Heart left ventricle (tissue), 16 donors: ENCODE measurements at regions of chr6 and their contacts with region 1.

Region 1: GRCh38 chr6:48765352-48765961 is 654.5 kb upstream of the PTCHD4 start:
- DNase-seq: peak in 3 of 5 donors; percentile 6 to 35 (median 26)
- ATAC-seq: peak in 1 of 4 donors; percentile 59
- H3K4me3 ChIP-seq: no peak overlapping the region
- H3K27ac ChIP-seq: no peak overlapping the region
- H3K4me1 ChIP-seq: peaks cover 0 to 2% (median 0%) of the 10 kb centered on the region in 12 donors
- H3K27me3 ChIP-seq: peaks cover 0 to 6% (median 0%) of the 10 kb centered on the region in 9 donors
- CTCF ChIP-seq: peak in 10 of 12 donors; percentile 12 to 58 (median 50)
- POLR2A ChIP-seq: no peak

Region 2: DNA sequence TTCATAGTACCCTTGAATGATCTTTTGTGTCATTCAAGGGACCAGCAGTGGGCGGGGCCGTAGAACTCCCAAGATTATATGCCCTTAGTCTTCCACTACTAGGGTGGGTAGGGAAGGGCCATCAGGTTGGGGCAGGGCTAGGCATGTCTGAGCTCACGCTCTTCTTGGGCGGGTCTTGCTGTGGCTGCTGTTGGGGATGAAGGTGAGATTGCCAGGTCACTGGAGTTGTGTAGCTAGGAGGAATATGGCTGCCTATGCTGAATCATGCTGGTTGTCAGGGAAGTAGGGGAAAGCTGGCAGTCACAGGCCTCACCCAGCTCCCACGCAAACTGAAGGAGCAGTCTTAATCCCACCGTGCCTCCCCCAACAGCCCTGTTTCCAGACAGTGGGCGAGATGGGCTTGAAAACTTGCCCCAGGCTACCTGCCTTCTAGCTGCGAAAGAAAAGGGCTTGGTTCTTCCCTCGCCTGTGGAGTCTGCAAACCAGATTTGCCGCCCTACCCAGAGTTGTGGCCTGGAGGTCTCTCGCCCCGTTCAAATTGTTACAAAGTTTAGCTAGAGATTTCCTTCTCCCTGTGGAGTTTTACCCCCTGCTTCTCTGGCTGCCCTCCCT is 1143.5 kb before region 1 on chr6:
- intact Hi-C with region 1: loop called in 1 of 10 experiments (anchors 10 kb)
- DNase-seq: no peak
- ATAC-seq: no peak
- H3K4me3 ChIP-seq: no peak overlapping the region
- H3K27ac ChIP-seq: no peak overlapping the region
- H3K4me1 ChIP-seq: no peaks in the 10 kb centered on the region
- H3K27me3 ChIP-seq: no peaks in the 10 kb centered on the region
- CTCF ChIP-seq: no peak
- POLR2A ChIP-seq: no peak

Region 3: GRCh38 chr6:47631269-47631772 is 1134.1 kb before region 1 on chr6:
- intact Hi-C with region 1: loop called in 2 of 10 experiments (anchors 5 to 10 kb)
- DNase-seq: no peak
- ATAC-seq: peak; percentile 49 to 73 (median 67)
- H3K4me3 ChIP-seq: no peak overlapping the region
- H3K27ac ChIP-seq: peak overlapping the region in 3 of 12 donors; percentile 2 to 15 (median 8)
- H3K4me1 ChIP-seq: peaks cover 0 to 25% (median 16%) of the 10 kb centered on the region in 12 donors
- H3K27me3 ChIP-seq: no peaks in the 10 kb centered on the region
- CTCF ChIP-seq: peak; percentile 53 to 84 (median 71)
- POLR2A ChIP-seq: no peak

Region 4: DNA sequence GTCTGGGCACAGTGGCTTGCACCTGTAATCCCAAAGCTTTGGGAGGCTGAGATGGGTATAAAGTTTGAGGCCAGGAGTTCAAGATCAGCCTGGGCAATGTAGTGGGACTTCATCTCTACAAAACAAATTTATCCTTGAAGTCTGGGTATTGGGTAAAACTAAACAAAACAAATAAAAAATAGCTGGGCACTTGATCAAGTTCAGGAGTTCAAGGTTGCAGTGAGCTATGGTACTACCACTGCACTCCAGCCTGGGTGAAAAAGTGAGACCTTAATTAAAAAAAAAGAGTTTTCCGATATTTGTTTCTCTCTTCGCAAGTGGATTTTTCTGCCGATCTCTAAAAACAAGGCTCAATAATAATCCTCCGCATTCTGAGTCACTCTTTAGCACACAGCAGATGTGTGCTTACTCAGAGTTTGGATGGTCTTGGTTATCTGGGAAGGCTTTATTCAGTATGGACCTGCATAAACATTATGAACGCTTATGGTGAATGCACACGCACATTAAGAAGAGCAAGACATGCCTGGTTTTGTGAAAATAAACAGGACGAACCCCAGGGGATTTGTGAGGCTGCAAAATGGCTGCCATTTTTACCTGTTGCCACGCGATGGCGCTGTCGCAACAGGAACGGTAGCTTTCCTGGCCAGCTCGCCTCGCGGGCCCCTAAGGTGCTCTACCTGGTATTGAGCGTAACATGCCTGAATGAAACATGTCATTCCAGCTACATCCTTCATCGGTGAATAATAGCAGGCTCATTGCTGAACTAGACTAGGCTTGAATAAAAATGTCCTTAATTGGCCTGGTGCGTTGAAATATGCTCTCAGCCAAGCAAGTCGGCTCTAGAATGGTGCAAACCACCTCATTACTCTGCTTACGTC is 977.6 kb before region 1 on chr6:
- intact Hi-C with region 1: loop called (anchors 2 to 5 kb)
- DNase-seq: peak; percentile 27 to 70 (median 39)
- ATAC-seq: peak; percentile 26 to 69 (median 54)
- H3K4me3 ChIP-seq: peak overlapping the region in 3 of 12 donors; percentile 4 to 19 (median 12)
- H3K27ac ChIP-seq: no peak overlapping the region
- H3K4me1 ChIP-seq: peaks cover 0 to 9% (median 1%) of the 10 kb centered on the region in 12 donors
- H3K27me3 ChIP-seq: peaks cover 0 to 18% (median 0%) of the 10 kb centered on the region in 9 donors
- CTCF ChIP-seq: peak; percentile 79 to 97 (median 92)
- POLR2A ChIP-seq: no peak

Region 5: DNA sequence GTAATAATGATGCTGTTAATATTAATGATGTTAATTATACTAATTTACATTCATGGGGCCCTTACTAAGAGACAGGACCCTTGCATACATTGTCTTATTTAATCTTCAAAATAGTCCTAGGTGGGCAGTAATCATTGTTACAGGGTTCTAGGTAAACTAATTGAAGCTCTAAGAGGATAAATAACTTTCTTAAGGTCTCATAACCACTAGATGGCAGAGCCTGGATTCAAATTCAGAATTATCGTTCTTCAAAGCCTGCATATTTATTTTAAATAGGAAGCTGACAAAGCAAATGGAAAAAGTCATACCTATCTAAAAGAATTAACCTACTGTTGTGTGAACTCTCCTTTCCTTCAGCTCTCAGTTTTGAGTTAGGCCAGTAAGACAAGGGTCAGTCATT is 678.0 kb before region 1 on chr6:
- intact Hi-C with region 1: loop called in 3 of 10 experiments (anchors 10 kb)
- DNase-seq: no peak
- ATAC-seq: no peak
- H3K4me3 ChIP-seq: no peak overlapping the region
- H3K27ac ChIP-seq: no peak overlapping the region
- H3K4me1 ChIP-seq: peaks cover 0 to 3% (median 0%) of the 10 kb centered on the region in 12 donors
- H3K27me3 ChIP-seq: no peaks in the 10 kb centered on the region
- CTCF ChIP-seq: peak in 10 of 12 donors; percentile 8 to 47 (median 35)
- POLR2A ChIP-seq: no peak

Region 6: GRCh38 chr6:48835421-48835958 is 70.0 kb after region 1 on chr6:
- intact Hi-C with region 1: no loop called
- DNase-seq: no peak
- ATAC-seq: no peak
- H3K4me3 ChIP-seq: no peak overlapping the region
- H3K27ac ChIP-seq: no peak overlapping the region
- H3K4me1 ChIP-seq: no peaks in the 10 kb centered on the region
- H3K27me3 ChIP-seq: no peaks in the 10 kb centered on the region
- CTCF ChIP-seq: no peak
- POLR2A ChIP-seq: no peak